Motor neuron (in vitro differentiated cells): ENCODE measurements at regions of chr1 and their contacts with region 1.

Region 1: GRCh38 chr1:28259307-28260167 is at the start of gene SESN2:
- ATAC-seq: peak; percentile 83 to 91 (median 88)
- H3K4me3 ChIP-seq: peak within 1 kb of the TSS; percentile 79 to 97 (median 83)
- H3K27ac ChIP-seq: peak within 1 kb of the TSS; percentile 90 to 92
- H3K4me1 ChIP-seq: peaks cover 41 to 44% of the 10 kb centered on the region in 2 donors
- total RNA-seq, gene SESN2: 18.5 to 74.0 (median 35.7) TPM

Region 2: DNA sequence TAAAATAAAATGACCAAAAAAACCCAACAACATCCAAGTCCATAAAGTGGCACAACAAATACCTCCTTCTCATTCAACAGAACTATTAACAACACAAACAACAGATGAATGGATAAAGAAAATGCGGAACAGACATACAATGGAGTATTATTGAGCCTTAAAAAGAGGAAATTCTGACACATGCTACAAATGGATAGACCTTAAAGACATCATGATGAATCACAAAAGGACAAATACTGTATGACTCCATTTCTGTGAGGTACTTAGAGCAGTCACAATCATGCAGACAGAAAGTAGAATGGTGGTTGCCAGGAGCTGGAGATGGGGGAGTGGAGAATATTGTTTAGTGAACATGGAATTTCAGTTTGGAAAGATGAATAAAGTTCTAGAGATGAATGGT is 213.8 kb before region 1 on chr1:
- in situ Hi-C with region 1: no loop called
- ATAC-seq: peak in 1 of 8 experiments; percentile 24
- H3K4me3 ChIP-seq: no peak overlapping the region
- H3K27ac ChIP-seq: no peak overlapping the region
- H3K4me1 ChIP-seq: no peaks in the 10 kb centered on the region

Region 3: GRCh38 chr1:28329395-28330153 is 70.0 kb after region 1 on chr1:
- in situ Hi-C with region 1: loop called in 1 of 9 experiments (anchors 10 kb)
- ATAC-seq: peak in 3 of 8 experiments; percentile 31 to 35 (median 33)
- H3K4me3 ChIP-seq: peak overlapping the region; percentile 52 to 67 (median 58)
- H3K27ac ChIP-seq: peak overlapping the region; percentile 74 to 81
- H3K4me1 ChIP-seq: peaks cover 7 to 13% of the 10 kb centered on the region in 2 donors